Mammary epithelial cell (primary cell): ENCODE measurements at regions of chr11 and their contacts with region 1.

Region 1: GRCh38 chr11:22787551-22788162 is 41.9 kb downstream of the SVIP start:
- DNase-seq: peak; percentile 16
- H3K4me3 ChIP-seq: no peak overlapping the region
- H3K27ac ChIP-seq: no peak overlapping the region
- H3K4me1 ChIP-seq: peaks cover 11% of the 10 kb centered on the region
- H3K27me3 ChIP-seq: no peaks in the 10 kb centered on the region
- CTCF ChIP-seq: peak; percentile 58 to 67

Region 2: GRCh38 chr11:22337596-22338485 is 449.8 kb before region 1 on chr11 and contains the start of gene SLC17A6:
- CTCF ChIA-PET with region 1: no interaction called
- dilution Hi-C with region 1: no loop called
- in situ Hi-C with region 1: loop called (anchors 25 kb)
- intact Hi-C with region 1: loop called (anchors 2 kb)
- DNase-seq: peak; percentile 31
- H3K4me3 ChIP-seq: no peak within 1 kb of the TSS
- H3K27ac ChIP-seq: no peak within 1 kb of the TSS
- H3K4me1 ChIP-seq: no peaks in the 10 kb centered on the region
- H3K27me3 ChIP-seq: peaks cover 35% of the 10 kb centered on the region
- CTCF ChIP-seq: no peak
- total RNA-seq, gene SLC17A6: not detected

Region 3: DNA sequence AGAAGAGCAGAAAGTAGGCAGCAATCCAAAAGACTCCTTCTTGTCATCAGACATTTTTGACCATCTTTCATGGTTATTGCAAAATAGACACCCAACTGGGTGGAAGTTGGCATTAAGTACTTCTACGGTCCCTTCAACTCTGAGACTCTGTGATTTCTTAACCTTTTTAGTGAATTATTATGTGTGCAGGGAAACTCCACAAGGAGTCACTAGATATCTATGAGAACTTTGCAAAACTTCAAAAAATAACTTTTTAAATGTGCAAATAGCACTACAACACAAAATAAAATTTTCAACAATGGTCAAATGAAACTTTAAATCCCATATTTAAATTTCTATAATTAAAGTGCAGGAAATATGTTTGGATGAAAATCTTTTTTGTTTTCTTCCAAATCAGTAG is 360.7 kb before region 1 on chr11:
- CTCF ChIA-PET with region 1: no interaction called
- dilution Hi-C with region 1: no loop called
- in situ Hi-C with region 1: no loop called
- intact Hi-C with region 1: loop called (anchors 5 kb)
- DNase-seq: no peak
- H3K4me3 ChIP-seq: no peak overlapping the region
- H3K27ac ChIP-seq: no peak overlapping the region
- H3K4me1 ChIP-seq: no peaks in the 10 kb centered on the region
- H3K27me3 ChIP-seq: no peaks in the 10 kb centered on the region
- CTCF ChIP-seq: peak in 1 of 2 donors; percentile 49

Region 4: DNA sequence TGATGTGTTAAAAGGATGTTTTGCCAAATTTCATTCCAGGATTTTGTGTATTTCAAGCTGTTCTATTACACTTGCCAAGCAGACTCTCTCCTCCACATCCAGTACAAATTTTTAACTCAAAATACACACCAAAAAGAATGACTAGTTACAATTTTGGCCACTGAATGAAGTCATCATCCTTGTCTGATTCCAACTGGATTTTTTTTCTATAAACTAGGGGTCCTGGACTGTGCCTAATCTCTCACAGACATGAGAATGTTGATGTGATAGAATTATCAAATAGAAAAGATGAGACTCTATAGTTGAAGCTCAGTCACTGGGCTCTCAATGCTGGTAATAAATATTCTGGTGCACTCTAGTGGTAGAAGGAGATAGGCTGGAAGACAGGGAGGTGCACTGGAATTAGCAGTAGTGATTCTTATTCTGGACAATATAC is 247.8 kb before region 1 on chr11:
- CTCF ChIA-PET with region 1: no interaction called
- dilution Hi-C with region 1: no loop called
- in situ Hi-C with region 1: no loop called
- intact Hi-C with region 1: loop called (anchors 5 kb)
- DNase-seq: peak; percentile 31
- H3K4me3 ChIP-seq: no peak overlapping the region
- H3K27ac ChIP-seq: no peak overlapping the region
- H3K4me1 ChIP-seq: peaks cover 13% of the 10 kb centered on the region
- H3K27me3 ChIP-seq: no peaks in the 10 kb centered on the region
- CTCF ChIP-seq: peak; percentile 83 to 84

Region 5: DNA sequence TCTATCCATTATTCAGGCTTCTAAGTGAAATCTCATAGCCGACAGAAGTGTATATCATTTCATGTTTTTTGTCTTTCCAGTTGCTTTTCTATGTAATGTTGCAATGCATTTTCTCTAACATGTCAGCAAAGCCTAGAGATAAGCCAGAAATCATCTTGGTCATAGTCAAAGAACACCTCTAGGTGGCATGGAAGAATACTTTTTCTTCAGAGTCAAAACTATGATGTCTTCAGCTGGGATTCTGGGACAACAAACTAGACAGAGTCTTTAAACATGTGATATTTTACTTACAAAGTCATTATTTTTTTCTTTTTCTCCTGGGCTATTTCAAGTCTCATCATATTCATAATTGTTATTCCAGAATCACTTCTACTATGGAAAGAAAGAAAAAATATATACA is 116.8 kb before region 1 on chr11:
- CTCF ChIA-PET with region 1: interaction called, 8 read pairs
- dilution Hi-C with region 1: no loop called
- in situ Hi-C with region 1: no loop called
- intact Hi-C with region 1: loop called (anchors 1 kb)
- DNase-seq: peak; percentile 19
- H3K4me3 ChIP-seq: no peak overlapping the region
- H3K27ac ChIP-seq: no peak overlapping the region
- H3K4me1 ChIP-seq: no peaks in the 10 kb centered on the region
- H3K27me3 ChIP-seq: peaks cover 19% of the 10 kb centered on the region
- CTCF ChIP-seq: peak; percentile 34 to 57

Region 6: DNA sequence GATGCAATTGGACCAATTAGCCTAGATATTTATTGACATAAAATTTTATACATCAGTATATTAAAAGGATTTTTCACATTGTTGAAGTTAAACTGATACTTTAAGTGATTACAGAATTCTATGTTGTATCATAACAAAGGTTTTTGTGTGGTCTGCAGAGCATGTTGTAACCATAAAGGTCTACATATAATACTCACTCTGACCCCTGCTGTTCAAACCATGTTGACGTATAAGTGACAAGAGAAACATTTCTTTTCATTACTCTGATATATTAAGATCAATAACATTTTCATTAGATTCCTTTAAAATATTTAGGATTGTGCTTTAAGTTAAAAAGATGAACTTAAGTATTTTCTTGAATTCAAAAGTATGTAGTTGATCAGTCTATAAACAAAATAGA is 57.3 kb before region 1 on chr11:
- CTCF ChIA-PET with region 1: no interaction called
- dilution Hi-C with region 1: no loop called
- in situ Hi-C with region 1: no loop called
- intact Hi-C with region 1: loop called (anchors 5 kb)
- DNase-seq: no peak
- H3K4me3 ChIP-seq: no peak overlapping the region
- H3K27ac ChIP-seq: no peak overlapping the region
- H3K4me1 ChIP-seq: no peaks in the 10 kb centered on the region
- H3K27me3 ChIP-seq: no peaks in the 10 kb centered on the region
- CTCF ChIP-seq: peak in 1 of 2 donors; percentile 40